MCF 10A (cell line): ENCODE measurements at regions of chr5 and their contacts with region 1.

Region 1: DNA sequence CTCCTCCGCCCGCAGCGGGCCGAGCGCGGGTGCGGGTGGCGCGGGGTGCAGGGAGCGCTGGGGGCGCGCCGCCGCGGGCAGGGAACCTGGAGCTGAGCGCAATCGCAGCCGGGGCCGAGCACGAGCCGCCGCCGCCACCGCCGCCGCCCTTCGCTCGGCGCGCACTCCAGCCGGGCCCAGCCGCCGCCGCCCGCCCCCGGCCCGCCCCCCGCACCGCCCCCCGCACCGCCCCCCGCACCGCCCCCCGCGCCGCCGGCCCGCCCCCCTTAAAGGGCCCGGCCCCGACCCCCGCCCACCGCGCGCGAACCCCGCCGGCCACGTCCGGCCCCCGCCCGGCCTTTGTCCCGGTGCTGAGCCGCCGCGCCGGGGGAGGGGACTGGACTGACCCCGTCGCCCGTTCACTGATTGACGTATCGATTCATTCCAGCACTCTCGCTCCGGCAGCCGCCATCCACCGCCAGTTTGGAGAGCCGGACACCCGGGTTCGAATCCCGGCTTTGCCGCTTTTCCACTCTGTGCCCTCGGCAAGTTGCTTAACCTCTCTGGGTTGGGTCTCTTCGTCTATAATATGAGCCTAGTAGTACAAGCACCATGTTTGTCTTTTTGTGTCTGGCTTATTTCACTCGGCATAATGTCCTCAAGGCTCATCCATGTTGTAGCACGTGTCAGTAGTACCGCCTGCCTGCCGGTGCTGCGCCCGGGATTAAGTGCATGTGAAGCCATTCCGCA is at the start of gene SH3PXD2B:
- DNase-seq: peak; percentile 68
- H3K4me3 Mint-ChIP-seq: peak within 1 kb of the TSS; percentile 91
- H3K27ac Mint-ChIP-seq: peak within 1 kb of the TSS; percentile 90
- H3K4me1 Mint-ChIP-seq: peaks cover 44% of the 10 kb centered on the region
- H3K27me3 Mint-ChIP-seq: no peaks in the 10 kb centered on the region
- CTCF ChIP-seq: no peak
- total RNA-seq, gene SH3PXD2B: 34.1 and 42.3 TPM in 2 replicates

Region 2: GRCh38 chr5:172283020-172283861 is 171.3 kb before region 1 on chr5 and contains the start of gene UBTD2:
- CTCF ChIA-PET with region 1: interaction called, 3 read pairs
- POLR2A ChIA-PET with region 1: interaction called, 10 read pairs
- intact Hi-C with region 1: no loop called
- DNase-seq: peak; percentile 88
- H3K4me3 Mint-ChIP-seq: peak within 1 kb of the TSS; percentile 95
- H3K27ac Mint-ChIP-seq: peak within 1 kb of the TSS; percentile 97
- H3K4me1 Mint-ChIP-seq: peaks cover 29% of the 10 kb centered on the region
- H3K27me3 Mint-ChIP-seq: no peaks in the 10 kb centered on the region
- CTCF ChIP-seq: peak; percentile 76
- total RNA-seq, gene UBTD2: 23.3 and 24.1 TPM in 2 replicates

Region 3: DNA sequence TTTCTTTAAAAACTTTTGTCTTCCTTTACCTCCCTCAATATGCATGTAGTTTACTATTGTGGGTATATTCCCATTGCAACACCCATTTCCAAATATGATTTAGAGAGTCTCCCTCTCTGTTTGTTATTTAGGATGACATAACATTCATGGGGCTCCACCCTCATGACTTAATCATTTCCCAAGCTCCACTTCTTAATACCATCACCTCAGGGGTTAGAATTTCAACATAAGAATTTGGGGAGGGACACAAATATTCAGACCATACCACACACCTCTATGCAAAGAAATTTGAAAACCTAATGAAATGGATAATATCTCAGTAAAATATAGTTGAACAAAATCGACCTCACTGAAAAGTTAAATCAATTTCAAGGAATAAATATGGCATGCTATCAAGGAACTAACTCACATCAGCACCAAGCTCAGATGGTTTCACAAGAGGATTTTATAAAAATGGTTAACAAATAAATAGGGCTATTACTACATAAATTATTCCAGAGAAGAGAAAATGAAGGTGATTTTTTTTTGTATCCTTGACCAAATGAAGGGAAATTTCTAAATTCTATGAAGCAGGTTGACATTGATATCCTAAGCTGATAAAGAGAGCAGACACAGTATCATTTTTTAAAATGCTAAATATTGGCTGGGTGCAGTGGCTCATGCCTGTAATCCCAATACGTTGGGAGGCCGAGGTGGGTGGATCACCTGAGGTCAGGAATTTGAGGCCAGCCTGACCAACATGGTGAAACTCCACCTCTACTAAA is 150.8 kb before region 1 on chr5:
- CTCF ChIA-PET with region 1: no interaction called
- POLR2A ChIA-PET with region 1: interaction called, 10 read pairs
- intact Hi-C with region 1: no loop called
- DNase-seq: peak; percentile 85
- H3K4me3 Mint-ChIP-seq: no peak overlapping the region
- H3K27ac Mint-ChIP-seq: no peak overlapping the region
- H3K4me1 Mint-ChIP-seq: peaks cover 11% of the 10 kb centered on the region
- H3K27me3 Mint-ChIP-seq: no peaks in the 10 kb centered on the region
- CTCF ChIP-seq: no peak

Region 4: DNA sequence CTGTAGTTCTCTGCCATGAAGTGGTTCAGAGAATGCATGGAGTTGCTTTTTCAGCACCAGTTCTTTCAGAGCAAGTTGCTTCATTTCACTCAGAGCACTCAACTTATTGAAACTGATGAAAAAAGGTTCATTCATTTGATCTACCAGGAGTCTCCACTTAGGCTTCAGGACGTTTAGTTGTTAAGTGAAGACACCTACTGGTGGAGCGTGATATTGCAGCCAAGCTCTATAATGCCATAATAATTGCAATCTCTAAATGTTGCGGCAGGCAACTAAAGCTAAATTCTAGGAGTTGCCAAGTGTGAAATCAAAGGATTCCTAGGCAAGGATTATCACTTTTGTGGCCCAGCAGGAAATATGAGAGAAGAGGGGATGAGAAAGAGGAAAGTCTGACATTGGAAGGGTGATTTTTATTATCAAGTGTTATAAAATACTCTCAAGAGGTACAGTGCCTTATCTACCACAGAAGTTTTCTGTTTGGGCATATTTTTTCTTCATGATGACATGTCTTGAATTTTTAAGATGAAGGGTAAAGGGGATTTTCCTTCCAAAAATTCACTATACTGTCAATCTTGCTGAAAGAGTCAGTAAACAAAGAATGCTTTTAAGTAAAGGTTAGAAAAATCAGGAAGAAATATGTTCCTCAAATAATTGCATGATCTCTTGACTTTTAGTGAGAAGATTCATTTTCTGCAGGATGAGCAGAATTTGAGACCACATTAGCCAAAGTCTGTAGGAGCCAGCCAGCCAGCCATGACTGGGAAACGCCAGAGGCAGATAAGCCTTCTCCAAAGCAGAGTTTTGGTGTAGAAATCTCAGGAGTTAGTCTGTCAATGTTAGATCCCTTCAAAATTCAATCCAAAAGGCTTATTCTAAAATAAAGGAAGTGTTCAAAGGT is 83.6 kb before region 1 on chr5:
- CTCF ChIA-PET with region 1: interaction called, 11 read pairs
- POLR2A ChIA-PET with region 1: interaction called, 3 read pairs
- intact Hi-C with region 1: no loop called
- DNase-seq: peak; percentile 64
- H3K4me3 Mint-ChIP-seq: no peak overlapping the region
- H3K27ac Mint-ChIP-seq: no peak overlapping the region
- H3K4me1 Mint-ChIP-seq: peaks cover 4% of the 10 kb centered on the region
- H3K27me3 Mint-ChIP-seq: no peaks in the 10 kb centered on the region
- CTCF ChIP-seq: peak; percentile 73

Region 5: DNA sequence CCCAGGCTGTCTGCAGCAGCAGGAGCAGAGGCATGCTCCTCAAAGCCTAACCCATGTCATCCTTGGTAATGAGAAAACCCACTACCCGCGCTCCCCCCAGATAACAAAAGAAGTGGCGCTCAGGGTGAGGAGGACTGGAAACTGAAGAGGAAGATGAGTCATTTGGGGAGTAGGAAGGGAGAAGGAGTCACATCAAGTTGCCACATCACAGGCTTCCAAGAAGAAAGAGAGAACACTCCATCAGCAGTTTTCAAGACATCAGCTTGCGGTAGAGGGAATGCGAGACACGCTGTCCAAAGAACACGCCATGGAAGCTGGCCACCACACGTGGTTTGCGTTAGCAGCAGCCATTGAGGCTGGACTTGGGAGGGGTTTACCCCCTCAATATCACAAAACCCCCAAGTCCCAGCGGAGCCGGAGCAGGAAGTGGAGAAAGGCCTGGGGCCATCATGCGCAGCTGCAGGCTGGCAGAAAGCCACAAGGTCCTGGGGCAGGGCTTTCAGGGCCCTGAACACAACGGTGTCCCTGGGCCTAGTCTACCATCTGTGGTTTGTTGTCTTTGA is 41.7 kb before region 1 on chr5:
- CTCF ChIA-PET with region 1: interaction called, 83 read pairs
- POLR2A ChIA-PET with region 1: interaction called, 305 read pairs
- intact Hi-C with region 1: loop called (anchors 1 kb)
- DNase-seq: peak; percentile 99
- H3K4me3 Mint-ChIP-seq: peak overlapping the region; percentile 19
- H3K27ac Mint-ChIP-seq: peak overlapping the region; percentile 76
- H3K4me1 Mint-ChIP-seq: peaks cover 59% of the 10 kb centered on the region
- H3K27me3 Mint-ChIP-seq: no peaks in the 10 kb centered on the region
- CTCF ChIP-seq: no peak

Region 6: DNA sequence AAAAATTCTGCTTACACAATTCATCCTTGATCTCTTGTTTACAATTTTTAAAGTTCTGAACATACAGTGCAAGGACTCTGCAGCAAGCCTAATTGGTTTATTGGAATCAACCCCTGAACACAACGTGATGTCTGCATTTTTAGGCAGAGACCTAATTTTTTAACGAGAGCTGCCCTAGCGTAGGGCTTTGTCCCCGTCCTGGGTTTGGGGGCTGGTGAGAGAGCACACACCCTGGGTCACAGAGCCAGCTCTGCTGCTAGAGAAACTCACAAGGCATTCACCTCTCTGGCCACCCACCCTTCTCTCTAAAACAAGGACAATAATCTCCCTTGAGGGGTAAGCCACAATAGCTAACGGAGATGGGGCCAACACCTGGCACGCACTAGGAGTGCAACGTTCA is 28.4 kb before region 1 on chr5:
- CTCF ChIA-PET with region 1: interaction called, 147 read pairs
- POLR2A ChIA-PET with region 1: interaction called, 305 read pairs
- intact Hi-C with region 1: no loop called
- DNase-seq: no peak
- H3K4me3 Mint-ChIP-seq: no peak overlapping the region
- H3K27ac Mint-ChIP-seq: no peak overlapping the region
- H3K4me1 Mint-ChIP-seq: peaks cover 25% of the 10 kb centered on the region
- H3K27me3 Mint-ChIP-seq: no peaks in the 10 kb centered on the region
- CTCF ChIP-seq: no peak

Region 7: GRCh38 chr5:172443441-172444109 is 10.9 kb before region 1 on chr5:
- CTCF ChIA-PET with region 1: interaction called, 147 read pairs
- POLR2A ChIA-PET with region 1: interaction called, 52 read pairs
- intact Hi-C with region 1: no loop called
- DNase-seq: peak; percentile 100
- H3K4me3 Mint-ChIP-seq: peak overlapping the region; percentile 28
- H3K27ac Mint-ChIP-seq: peak overlapping the region; percentile 46
- H3K4me1 Mint-ChIP-seq: peaks cover 26% of the 10 kb centered on the region
- H3K27me3 Mint-ChIP-seq: no peaks in the 10 kb centered on the region
- CTCF ChIP-seq: no peak